ENCODE measurements at regions of chr16 and their contacts with region 1.

Region 1: DNA sequence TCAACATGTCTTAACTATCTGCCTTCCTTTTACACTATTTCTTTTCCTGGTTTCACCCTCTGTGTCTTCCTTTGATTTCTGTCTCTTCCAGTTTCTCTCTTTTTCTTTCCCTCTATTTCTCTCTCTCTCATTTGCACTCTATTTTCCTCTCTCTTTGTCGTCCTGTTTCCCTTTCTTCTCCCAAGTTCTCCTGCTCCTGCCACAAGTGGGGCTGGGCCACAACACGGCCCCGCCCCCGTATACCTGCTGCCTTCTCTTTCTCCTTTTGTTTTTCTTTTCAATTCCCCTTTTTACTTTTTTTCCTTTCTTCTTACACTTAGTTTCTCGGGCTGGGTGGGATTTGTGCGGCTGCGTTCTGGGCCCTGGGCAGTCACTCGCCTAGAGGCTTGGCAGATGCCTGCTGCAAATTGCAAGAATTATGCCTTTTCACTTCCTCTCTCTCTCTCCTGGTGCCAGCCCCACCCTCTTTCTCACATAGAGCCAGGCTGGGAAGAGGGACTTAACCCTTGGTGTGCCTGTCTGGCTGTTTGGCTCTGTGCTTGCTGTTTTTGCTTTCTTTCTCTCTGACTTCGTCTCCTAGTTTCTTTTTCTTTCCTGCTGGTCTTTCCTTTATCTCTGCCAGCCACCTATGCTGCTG is 2139.4 kb downstream of the TP53TG3F start:
- DNase-seq: no peak
- ATAC-seq: peak; percentile 72
- H3K4me3 ChIP-seq: no peak overlapping the region
- H3K27ac ChIP-seq: no peak overlapping the region
- H3K4me1 ChIP-seq: no peaks in the 10 kb centered on the region
- H3K27me3 ChIP-seq: no peaks in the 10 kb centered on the region
- CTCF ChIP-seq: no peak
- EP300 ChIP-seq: no peak
- POLR2A ChIP-seq: no peak
- RAD21 ChIP-seq: no peak

Region 2: DNA sequence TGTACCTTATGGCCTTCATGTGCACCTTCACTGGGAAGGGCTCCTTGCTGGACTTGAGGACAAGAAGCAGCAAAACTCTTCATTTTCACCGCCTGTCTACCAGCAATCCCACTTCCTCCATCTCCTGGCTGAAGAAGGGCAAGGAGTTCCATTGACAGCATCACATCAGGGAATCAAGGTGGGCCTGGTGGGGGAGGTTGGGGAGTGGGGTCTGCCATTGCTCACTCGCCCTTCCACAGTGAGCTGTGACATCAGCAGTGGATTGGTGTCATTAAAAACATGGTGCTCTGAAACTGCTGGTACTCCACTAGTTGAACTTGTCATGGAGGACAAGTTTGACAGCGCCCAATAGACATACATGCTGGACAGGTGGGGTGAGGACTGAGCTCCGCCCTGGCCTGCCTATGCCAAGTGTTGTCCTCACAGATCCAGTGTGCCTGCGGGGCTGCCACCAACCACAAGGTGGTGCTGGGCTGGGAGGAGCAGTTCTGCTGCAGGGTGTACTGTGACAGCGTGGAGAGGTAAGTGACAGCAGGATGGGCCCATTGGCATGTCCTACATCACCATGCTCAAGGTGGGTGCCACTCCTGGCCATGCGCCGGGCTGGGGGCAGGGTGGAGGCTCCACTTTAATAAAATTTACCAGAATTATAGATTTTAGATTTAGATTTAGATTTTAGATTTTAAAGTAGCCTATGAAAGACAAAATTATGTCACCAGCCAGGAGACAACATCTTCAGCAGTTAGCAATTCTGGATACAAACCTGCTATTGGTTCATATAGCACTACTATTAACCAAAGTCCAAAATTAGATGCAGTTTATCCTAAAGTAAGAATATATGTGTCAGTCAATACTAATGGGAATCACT is 410.3 kb before region 1 on chr16:
- CTCF ChIA-PET with region 1: no interaction called
- POLR2A ChIA-PET with region 1: no interaction called
- RAD21 ChIA-PET with region 1: no interaction called
- SMC1A ChIA-PET with region 1: no interaction called
- in situ Hi-C with region 1: loop called (anchors 25 kb)
- intact Hi-C with region 1: no loop called
- DNase-seq: no peak
- ATAC-seq: no peak
- H3K4me3 ChIP-seq: no peak overlapping the region
- H3K27ac ChIP-seq: no peak overlapping the region
- H3K4me1 ChIP-seq: no peaks in the 10 kb centered on the region
- H3K27me3 ChIP-seq: no peaks in the 10 kb centered on the region
- CTCF ChIP-seq: no peak
- EP300 ChIP-seq: no peak
- POLR2A ChIP-seq: no peak
- RAD21 ChIP-seq: no peak

Region 3: GRCh38 chr16:35207059-35207999 is 391.5 kb before region 1 on chr16:
- CTCF ChIA-PET with region 1: no interaction called
- POLR2A ChIA-PET with region 1: no interaction called
- RAD21 ChIA-PET with region 1: no interaction called
- SMC1A ChIA-PET with region 1: no interaction called
- in situ Hi-C with region 1: no loop called
- intact Hi-C with region 1: no loop called
- DNase-seq: no peak
- ATAC-seq: no peak
- H3K4me3 ChIP-seq: no peak overlapping the region
- H3K27ac ChIP-seq: no peak overlapping the region
- H3K4me1 ChIP-seq: no peaks in the 10 kb centered on the region
- H3K27me3 ChIP-seq: no peaks in the 10 kb centered on the region
- CTCF ChIP-seq: no peak
- EP300 ChIP-seq: no peak
- POLR2A ChIP-seq: no peak
- RAD21 ChIP-seq: no peak

Region 4: DNA sequence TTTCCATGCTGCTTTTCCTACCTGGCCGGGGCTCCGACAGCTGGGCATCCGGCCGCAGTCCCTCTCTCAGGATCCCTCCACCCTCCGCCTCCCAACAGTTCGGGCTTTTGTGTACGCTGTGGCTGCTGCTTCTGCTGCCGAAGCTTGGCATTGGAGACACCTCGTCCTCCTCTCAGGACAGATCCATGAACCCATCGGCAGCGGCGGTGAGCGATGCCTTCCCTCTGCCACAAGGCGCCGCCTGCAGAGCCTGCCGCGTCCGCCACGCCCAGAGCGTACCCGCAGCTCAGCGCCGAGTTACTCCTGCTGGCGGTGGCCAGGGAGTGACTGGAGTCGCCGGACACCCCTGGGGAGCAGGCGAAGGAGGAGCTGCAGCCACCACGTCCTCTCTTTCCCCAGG is 106.6 kb before region 1 on chr16:
- CTCF ChIA-PET with region 1: no interaction called
- POLR2A ChIA-PET with region 1: no interaction called
- RAD21 ChIA-PET with region 1: no interaction called
- SMC1A ChIA-PET with region 1: no interaction called
- in situ Hi-C with region 1: loop called (anchors 25 kb)
- intact Hi-C with region 1: no loop called
- DNase-seq: no peak
- ATAC-seq: no peak
- H3K4me3 ChIP-seq: no peak overlapping the region
- H3K27ac ChIP-seq: no peak overlapping the region
- H3K4me1 ChIP-seq: no peaks in the 10 kb centered on the region
- H3K27me3 ChIP-seq: no peaks in the 10 kb centered on the region
- CTCF ChIP-seq: no peak
- EP300 ChIP-seq: no peak
- POLR2A ChIP-seq: no peak
- RAD21 ChIP-seq: no peak

Region 5: DNA sequence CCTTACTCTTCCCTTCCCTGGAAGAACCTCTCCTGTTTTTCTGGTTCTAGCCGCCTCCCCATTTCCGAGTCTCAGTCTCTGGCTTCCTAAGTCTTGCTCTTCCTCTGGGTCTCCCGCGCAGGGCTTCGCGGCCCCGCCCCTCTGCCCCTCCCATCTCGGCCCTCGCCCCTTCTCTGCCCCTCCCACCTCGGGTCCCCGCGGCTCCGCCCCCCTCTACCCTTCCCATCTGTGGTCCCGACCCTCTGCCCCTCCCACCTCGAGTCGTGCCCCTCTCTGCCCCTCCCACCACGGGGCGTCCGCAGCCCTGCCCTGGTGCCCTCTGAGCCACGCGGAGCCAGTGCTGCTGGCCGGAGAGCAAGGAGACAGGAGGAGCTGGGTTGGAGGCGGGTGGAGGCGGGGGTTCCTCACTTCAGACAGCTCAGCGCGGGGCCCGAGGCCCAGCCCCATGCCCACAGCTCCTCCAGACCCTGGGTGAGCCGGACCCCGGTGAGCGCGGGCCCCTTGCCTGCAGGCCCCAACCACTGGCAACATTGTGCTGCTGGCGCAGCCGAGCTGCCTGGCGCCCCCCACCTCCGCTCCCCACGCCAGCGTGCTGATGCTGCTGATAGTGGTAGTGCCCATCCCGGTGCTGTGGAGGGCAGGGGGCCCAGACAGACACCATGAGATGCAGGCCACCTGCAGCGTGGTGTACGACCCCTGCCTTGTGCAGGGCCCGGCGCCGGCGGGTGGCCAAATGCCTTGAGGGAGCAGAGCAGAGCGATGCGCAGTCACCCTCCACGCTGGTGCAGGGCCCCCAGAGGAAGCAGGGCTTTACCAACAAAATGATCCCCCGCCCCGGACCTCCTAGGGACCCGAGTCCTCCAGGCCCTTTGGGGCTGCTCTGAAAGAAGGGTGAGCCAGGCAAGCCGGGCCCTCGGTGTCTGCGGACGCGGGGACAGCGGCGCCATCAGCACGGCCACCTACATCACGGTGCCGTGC is 24.1 kb before region 1 on chr16:
- CTCF ChIA-PET with region 1: no interaction called
- POLR2A ChIA-PET with region 1: no interaction called
- RAD21 ChIA-PET with region 1: no interaction called
- SMC1A ChIA-PET with region 1: no interaction called
- in situ Hi-C with region 1: no loop called
- intact Hi-C with region 1: no loop called
- DNase-seq: no peak
- ATAC-seq: no peak
- H3K4me3 ChIP-seq: no peak overlapping the region
- H3K27ac ChIP-seq: no peak overlapping the region
- H3K4me1 ChIP-seq: no peaks in the 10 kb centered on the region
- H3K27me3 ChIP-seq: no peaks in the 10 kb centered on the region
- CTCF ChIP-seq: no peak
- EP300 ChIP-seq: no peak
- POLR2A ChIP-seq: no peak
- RAD21 ChIP-seq: no peak

Region 6: GRCh38 chr16:35651841-35652240 is 53.0 kb after region 1 on chr16:
- CTCF ChIA-PET with region 1: no interaction called
- POLR2A ChIA-PET with region 1: no interaction called
- RAD21 ChIA-PET with region 1: interaction called, 3 read pairs
- SMC1A ChIA-PET with region 1: interaction called, 3 read pairs
- in situ Hi-C with region 1: no loop called
- intact Hi-C with region 1: loop called (anchors 10 kb)
- DNase-seq: no peak
- ATAC-seq: no peak
- H3K4me3 ChIP-seq: no peak overlapping the region
- H3K27ac ChIP-seq: no peak overlapping the region
- H3K4me1 ChIP-seq: no peaks in the 10 kb centered on the region
- H3K27me3 ChIP-seq: no peaks in the 10 kb centered on the region
- CTCF ChIP-seq: no peak
- EP300 ChIP-seq: no peak
- POLR2A ChIP-seq: no peak
- RAD21 ChIP-seq: no peak

Region 7: DNA sequence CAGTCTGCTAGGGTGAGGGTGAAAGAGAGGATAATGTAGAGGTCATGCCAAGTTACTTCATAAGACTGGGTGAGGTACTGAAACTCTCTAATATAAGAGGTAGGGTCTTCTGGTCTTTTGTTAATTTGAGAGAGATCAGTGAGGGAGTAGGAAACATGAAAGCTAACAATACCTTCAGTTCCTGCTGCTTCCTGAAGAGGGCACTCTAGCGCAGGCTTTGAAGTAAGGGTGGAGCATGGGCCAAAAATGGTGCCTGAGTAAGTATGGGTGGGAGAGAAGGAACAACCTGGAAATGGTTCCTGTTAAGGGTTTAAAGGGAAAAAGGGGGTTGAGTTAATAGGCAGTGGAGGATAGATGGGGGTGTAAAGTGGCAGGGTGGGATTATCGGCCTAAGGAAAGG is 310.1 kb after region 1 on chr16:
- CTCF ChIA-PET with region 1: no interaction called
- POLR2A ChIA-PET with region 1: no interaction called
- RAD21 ChIA-PET with region 1: no interaction called
- SMC1A ChIA-PET with region 1: no interaction called
- in situ Hi-C with region 1: loop called (anchors 25 kb)
- intact Hi-C with region 1: no loop called
- DNase-seq: no peak
- ATAC-seq: no peak
- H3K4me3 ChIP-seq: no peak overlapping the region
- H3K27ac ChIP-seq: no peak overlapping the region
- H3K4me1 ChIP-seq: no peaks in the 10 kb centered on the region
- H3K27me3 ChIP-seq: no peaks in the 10 kb centered on the region
- CTCF ChIP-seq: peak in 1 of 3 experiments; percentile 15; a peak in 1 of 6 replicates
- EP300 ChIP-seq: no peak
- POLR2A ChIP-seq: no peak
- RAD21 ChIP-seq: no peak

Measured in GM12878 (cell line).